BJ (cell line): ENCODE measurements at regions of chr20 and their contacts with region 1.

Region 1: GRCh38 chr20:4064144-4064909 is 49.0 kb upstream of the RNF24 start:
- DNase-seq: peak; percentile 78
- H3K4me3 ChIP-seq: no peak overlapping the region
- H3K27me3 ChIP-seq: no peaks in the 10 kb centered on the region
- CTCF ChIP-seq: 0 out of 2 replicates have a peak, but pooled peaks have one; percentile 2

Region 2: DNA sequence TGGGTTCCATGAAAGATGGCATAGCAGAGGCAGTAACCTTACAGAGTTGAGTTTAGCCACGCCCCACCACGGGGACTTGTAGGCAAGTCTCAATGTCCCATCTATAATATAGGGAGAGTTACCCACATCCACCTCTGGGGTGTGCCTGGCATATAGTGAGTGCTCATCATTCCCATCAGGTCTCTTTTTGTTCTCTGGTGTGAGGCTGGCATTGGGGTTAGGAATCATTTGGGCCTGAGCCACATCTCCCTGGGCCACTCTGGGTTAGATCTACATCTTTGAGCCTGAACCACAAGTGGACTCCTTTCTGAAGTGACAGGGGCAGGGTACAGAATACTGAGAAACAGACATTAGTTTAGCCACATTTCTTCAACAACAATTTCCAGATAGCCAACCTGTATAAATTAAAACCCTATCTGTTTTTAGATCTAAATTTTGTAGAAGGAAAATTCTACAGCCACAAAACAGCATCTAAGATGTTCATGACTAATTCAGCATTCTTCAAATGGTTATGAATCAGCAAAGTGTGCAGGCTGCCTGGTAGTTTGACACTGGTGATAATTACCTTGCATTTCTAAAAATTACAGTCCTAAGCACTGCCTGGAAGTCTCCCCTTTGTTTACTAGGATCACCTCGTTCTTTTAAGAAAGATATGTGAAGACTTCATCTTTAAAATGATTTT is 69.1 kb before region 1 on chr20:
- CTCF ChIA-PET with region 1: no interaction called
- POLR2A ChIA-PET with region 1: interaction called, 17 read pairs
- DNase-seq: no peak
- H3K4me3 ChIP-seq: no peak overlapping the region
- H3K27me3 ChIP-seq: no peaks in the 10 kb centered on the region
- CTCF ChIP-seq: no peak

Region 3: DNA sequence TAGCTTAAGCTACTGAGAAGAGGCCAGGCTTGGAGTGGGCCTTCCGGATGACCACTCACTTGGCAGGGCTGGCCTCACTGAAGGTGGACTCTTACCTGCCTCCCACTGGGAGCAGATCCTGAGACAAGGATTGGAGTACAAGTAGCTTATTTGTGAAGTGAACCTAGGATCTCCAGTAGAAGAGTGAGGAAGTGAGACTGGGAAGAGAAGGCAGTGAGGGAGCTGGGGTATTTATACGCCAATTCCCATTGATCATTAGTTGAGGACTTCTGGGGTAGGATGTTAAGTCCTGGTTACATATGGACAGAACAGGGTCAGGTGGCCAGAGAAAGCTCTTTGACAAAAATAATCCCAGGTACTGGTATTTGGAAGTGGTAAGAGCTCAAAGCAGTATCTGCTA is 16.7 kb before region 1 on chr20:
- CTCF ChIA-PET with region 1: interaction called, 3 read pairs
- POLR2A ChIA-PET with region 1: interaction called, 28 read pairs
- DNase-seq: no peak
- H3K4me3 ChIP-seq: no peak overlapping the region
- H3K27me3 ChIP-seq: no peaks in the 10 kb centered on the region
- CTCF ChIP-seq: no peak